ENCODE measurements at regions of chr12 and their contacts with region 1.

Region 1: GRCh38 chr12:112160611-112161010 is 35.3 kb downstream of the TRAFD1 start:
- DNase-seq: peak in 1 of 14 experiments; percentile 7
- ATAC-seq: no peak
- H3K4me3 ChIP-seq: no peak overlapping the region
- H3K4me3 Mint-ChIP-seq: no peak overlapping the region
- H3K27ac ChIP-seq: no peak overlapping the region
- H3K27ac Mint-ChIP-seq: no peak overlapping the region
- H3K4me1 ChIP-seq: peaks cover 19% of the 10 kb centered on the region
- H3K4me1 Mint-ChIP-seq: peaks cover 11% of the 10 kb centered on the region
- H3K27me3 ChIP-seq: no peaks in the 10 kb centered on the region
- H3K27me3 Mint-ChIP-seq: no peaks in the 10 kb centered on the region
- CTCF ChIP-seq: no peak

Region 2: GRCh38 chr12:112103758-112104504 is 56.7 kb before region 1 on chr12:
- CTCF ChIA-PET with region 1: no interaction called
- POLR2A ChIA-PET with region 1: no interaction called
- intact Hi-C with region 1: no loop called
- DNase-seq: no peak
- ATAC-seq: no peak
- H3K4me3 ChIP-seq: no peak overlapping the region
- H3K4me3 Mint-ChIP-seq: no peak overlapping the region
- H3K27ac ChIP-seq: no peak overlapping the region
- H3K27ac Mint-ChIP-seq: peak overlapping the region; percentile 55
- H3K4me1 ChIP-seq: peaks cover 29% of the 10 kb centered on the region
- H3K4me1 Mint-ChIP-seq: peaks cover 57% of the 10 kb centered on the region
- H3K27me3 ChIP-seq: no peaks in the 10 kb centered on the region
- H3K27me3 Mint-ChIP-seq: no peaks in the 10 kb centered on the region
- CTCF ChIP-seq: no peak

Region 3: GRCh38 chr12:112125250-112125999 is 35.2 kb before region 1 on chr12 and contains the start of gene TRAFD1:
- CTCF ChIA-PET with region 1: no interaction called
- POLR2A ChIA-PET with region 1: interaction called, 15 read pairs
- intact Hi-C with region 1: no loop called
- DNase-seq: peak; percentile 96 to 99 (median 98)
- ATAC-seq: peak; percentile 98
- H3K4me3 ChIP-seq: peak within 1 kb of the TSS; percentile 73
- H3K4me3 Mint-ChIP-seq: peak within 1 kb of the TSS; percentile 87
- H3K27ac ChIP-seq: peak within 1 kb of the TSS; percentile 68
- H3K27ac Mint-ChIP-seq: peak within 1 kb of the TSS; percentile 76
- H3K4me1 ChIP-seq: peaks cover 45% of the 10 kb centered on the region
- H3K4me1 Mint-ChIP-seq: peaks cover 43% of the 10 kb centered on the region
- H3K27me3 ChIP-seq: no peaks in the 10 kb centered on the region
- H3K27me3 Mint-ChIP-seq: no peaks in the 10 kb centered on the region
- CTCF ChIP-seq: no peak
- total RNA-seq, gene TRAFD1: 19.6 to 20.4 TPM

Region 4: DNA sequence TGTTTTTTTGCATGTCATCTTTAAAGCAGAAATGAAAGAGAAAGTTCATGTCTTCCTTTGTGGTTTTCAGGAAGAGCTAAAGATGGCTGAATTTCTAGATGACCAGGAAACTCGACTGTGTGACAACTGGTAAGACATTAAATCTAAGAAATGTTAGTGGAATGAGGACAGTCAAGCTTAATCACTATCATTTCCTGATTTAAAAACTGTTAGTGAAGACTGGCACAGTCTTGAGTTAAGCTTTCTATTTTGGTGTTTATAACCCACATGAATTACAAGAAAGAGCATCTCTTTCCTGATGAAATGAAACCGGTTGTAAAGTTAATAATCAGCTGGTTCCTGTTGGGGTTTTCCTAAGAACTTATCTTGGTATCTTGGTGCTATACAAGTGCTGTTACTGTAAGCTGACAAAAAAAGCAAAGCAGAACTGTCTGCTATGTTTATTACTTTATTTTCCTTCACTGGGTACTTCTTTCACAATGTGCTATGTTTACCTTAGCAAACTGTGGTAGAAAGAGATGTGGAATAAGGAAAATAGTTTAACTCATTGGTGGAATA is 30.1 kb before region 1 on chr12:
- CTCF ChIA-PET with region 1: no interaction called
- POLR2A ChIA-PET with region 1: interaction called, 15 read pairs
- intact Hi-C with region 1: no loop called
- DNase-seq: peak in 3 of 14 experiments; percentile 78 to 84 (median 82)
- ATAC-seq: peak; percentile 65
- H3K4me3 ChIP-seq: peak overlapping the region; percentile 17
- H3K4me3 Mint-ChIP-seq: peak overlapping the region; percentile 70
- H3K27ac ChIP-seq: peak overlapping the region; percentile 57 to 69
- H3K27ac Mint-ChIP-seq: peak overlapping the region; percentile 76
- H3K4me1 ChIP-seq: peaks cover 47% of the 10 kb centered on the region
- H3K4me1 Mint-ChIP-seq: peaks cover 72% of the 10 kb centered on the region
- H3K27me3 ChIP-seq: no peaks in the 10 kb centered on the region
- H3K27me3 Mint-ChIP-seq: no peaks in the 10 kb centered on the region
- CTCF ChIP-seq: no peak

Region 5: GRCh38 chr12:112270673-112271072 is 110.1 kb after region 1 on chr12:
- CTCF ChIA-PET with region 1: no interaction called
- POLR2A ChIA-PET with region 1: no interaction called
- intact Hi-C with region 1: no loop called
- DNase-seq: no peak
- ATAC-seq: no peak
- H3K4me3 ChIP-seq: no peak overlapping the region
- H3K4me3 Mint-ChIP-seq: no peak overlapping the region
- H3K27ac ChIP-seq: no peak overlapping the region
- H3K27ac Mint-ChIP-seq: no peak overlapping the region
- H3K4me1 ChIP-seq: no peaks in the 10 kb centered on the region
- H3K4me1 Mint-ChIP-seq: no peaks in the 10 kb centered on the region
- H3K27me3 ChIP-seq: no peaks in the 10 kb centered on the region
- H3K27me3 Mint-ChIP-seq: no peaks in the 10 kb centered on the region
- CTCF ChIP-seq: no peak

Region 6: DNA sequence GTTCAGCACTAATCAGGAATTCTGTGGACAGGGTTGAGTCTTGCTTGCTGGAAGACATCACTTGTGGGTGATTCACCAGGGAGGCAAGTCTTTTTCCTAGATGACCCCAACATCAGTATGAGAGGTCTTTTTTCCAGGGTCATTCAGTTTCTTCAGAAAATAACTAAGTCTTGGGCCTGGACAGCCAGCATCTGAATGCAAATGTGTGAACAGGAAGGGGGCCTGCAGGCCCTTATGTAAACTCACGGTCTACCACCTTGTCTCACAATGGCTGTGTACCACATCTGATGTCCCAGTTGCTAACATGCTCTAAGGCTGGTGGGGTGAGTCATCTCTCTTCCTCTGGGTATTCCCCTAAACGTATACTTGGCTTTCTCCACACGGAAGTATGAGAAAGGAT is 142.4 kb after region 1 on chr12:
- CTCF ChIA-PET with region 1: no interaction called
- POLR2A ChIA-PET with region 1: no interaction called
- intact Hi-C with region 1: no loop called
- DNase-seq: peak in 8 of 14 experiments; percentile 7 to 77 (median 30)
- ATAC-seq: peak; percentile 84
- H3K4me3 ChIP-seq: no peak overlapping the region
- H3K4me3 Mint-ChIP-seq: no peak overlapping the region
- H3K27ac ChIP-seq: no peak overlapping the region
- H3K27ac Mint-ChIP-seq: peak overlapping the region; percentile 58
- H3K4me1 ChIP-seq: peaks cover 3% of the 10 kb centered on the region
- H3K4me1 Mint-ChIP-seq: peaks cover 4% of the 10 kb centered on the region
- H3K27me3 ChIP-seq: no peaks in the 10 kb centered on the region
- H3K27me3 Mint-ChIP-seq: no peaks in the 10 kb centered on the region
- CTCF ChIP-seq: no peak

Region 7: GRCh38 chr12:112450725-112451124 is 290.1 kb after region 1 on chr12:
- CTCF ChIA-PET with region 1: no interaction called
- POLR2A ChIA-PET with region 1: no interaction called
- intact Hi-C with region 1: no loop called
- DNase-seq: no peak
- ATAC-seq: no peak
- H3K4me3 ChIP-seq: no peak overlapping the region
- H3K4me3 Mint-ChIP-seq: no peak overlapping the region
- H3K27ac ChIP-seq: no peak overlapping the region
- H3K27ac Mint-ChIP-seq: no peak overlapping the region
- H3K4me1 ChIP-seq: peaks cover 10% of the 10 kb centered on the region
- H3K4me1 Mint-ChIP-seq: peaks cover 13% of the 10 kb centered on the region
- H3K27me3 ChIP-seq: no peaks in the 10 kb centered on the region
- H3K27me3 Mint-ChIP-seq: no peaks in the 10 kb centered on the region
- CTCF ChIP-seq: no peak

Measured in CD4-positive, alpha-beta T cell (primary cell).